ENCODE measurements at regions of chr19 and their contacts with region 1.

Region 1: DNA sequence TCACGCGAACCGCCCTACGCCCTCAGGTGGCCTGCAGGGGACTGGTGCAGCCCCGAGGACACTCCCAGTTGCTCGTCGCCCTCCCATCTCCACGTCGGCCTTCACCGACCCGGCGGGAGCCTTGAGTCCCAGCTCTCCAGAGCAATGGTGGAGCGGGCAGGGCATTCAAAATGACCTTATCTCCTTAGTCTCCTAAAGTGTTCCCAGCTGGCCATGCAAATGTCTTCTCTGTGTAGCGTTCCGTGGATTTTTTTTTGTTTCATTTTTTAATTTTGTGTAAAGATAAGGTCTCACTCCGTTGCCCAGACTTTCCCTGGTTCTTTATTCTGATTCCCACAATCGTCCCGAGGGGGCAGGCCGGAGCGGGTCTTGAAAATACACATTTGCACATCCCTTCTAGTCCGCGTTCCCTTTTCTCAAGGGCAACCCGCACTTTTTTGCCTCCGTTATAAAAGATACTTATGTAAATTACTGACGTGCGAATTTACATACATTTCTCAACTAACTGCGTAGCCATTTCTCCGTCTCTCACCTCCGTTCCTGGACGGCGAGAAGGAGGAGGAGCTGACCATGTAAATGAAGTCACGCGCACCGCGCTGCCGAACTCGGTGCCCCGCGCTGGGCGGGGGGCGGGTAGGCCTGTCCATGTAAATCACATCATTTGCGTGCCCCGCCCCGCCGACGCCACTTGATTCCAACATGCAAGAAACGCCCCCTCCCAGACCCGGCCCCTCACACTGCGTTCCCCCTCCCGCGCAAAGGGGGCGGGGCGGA is 581 bp upstream of the EGLN2 start:
- DNase-seq: peak; percentile 100
- ATAC-seq: peak; percentile 84

Region 2: DNA sequence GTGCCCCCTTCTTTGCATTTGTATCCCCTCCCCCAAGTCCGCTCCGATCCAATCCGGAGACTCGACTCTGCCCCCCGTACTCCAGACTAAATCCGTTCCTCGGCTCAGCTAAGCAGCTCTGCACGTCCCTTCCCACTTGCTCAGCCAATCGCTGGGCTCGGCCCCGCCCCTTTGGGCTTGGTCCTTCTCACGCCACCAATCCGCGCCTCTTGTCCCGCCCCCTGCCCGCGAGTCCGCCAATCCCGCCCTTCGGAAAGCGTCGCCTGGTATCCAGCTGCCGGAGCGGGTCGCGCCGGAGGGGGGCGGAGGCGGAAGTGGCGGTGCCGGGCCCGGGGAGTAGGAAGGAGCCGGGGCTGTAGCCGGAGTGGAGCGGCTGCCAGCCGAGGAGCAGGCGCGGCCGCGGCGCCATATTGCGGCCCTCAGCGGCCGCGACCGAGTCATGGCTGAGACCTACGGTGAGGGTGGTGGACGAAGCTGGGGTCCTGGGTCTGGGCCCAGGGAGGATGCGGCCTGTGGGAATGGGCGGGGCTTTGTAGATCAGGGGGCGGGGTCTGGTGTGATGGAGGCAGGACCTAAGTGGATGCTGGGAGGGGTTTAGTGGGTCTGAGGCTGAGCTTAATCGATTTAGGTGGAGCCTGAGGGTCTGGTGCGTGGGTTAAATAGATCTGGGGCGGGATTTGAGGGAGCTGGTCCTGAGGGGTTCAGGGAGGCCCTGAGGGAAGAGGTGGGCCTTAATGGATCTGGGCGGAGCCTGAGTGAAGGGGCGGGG is 20.3 kb before region 1 on chr19 and contains the start of gene RAB4B:
- intact Hi-C with region 1: loop called (anchors 1 kb)
- DNase-seq: peak; percentile 100
- ATAC-seq: peak; percentile 96
- total RNA-seq, gene RAB4B: 12.6 TPM